ENCODE measurements at regions of chr17 and their contacts with region 1.

Region 1: GRCh38 chr17:78176548-78177025 is 8.2 kb downstream of the SYNGR2 start:
- DNase-seq: peak; percentile 68 to 79
- ATAC-seq: peak in 7 of 8 donors; percentile 15 to 52 (median 36)
- H3K4me3 ChIP-seq: no peak overlapping the region
- H3K27ac ChIP-seq: peak overlapping the region in 4 of 10 donors; percentile 31 to 94 (median 88)
- H3K4me1 ChIP-seq: peaks cover 37 to 78% (median 59%) of the 10 kb centered on the region in 9 donors
- H3K27me3 ChIP-seq: no peaks in the 10 kb centered on the region
- CTCF ChIP-seq: peak in 8 of 9 donors; percentile 83 to 95 (median 92)

Region 2: DNA sequence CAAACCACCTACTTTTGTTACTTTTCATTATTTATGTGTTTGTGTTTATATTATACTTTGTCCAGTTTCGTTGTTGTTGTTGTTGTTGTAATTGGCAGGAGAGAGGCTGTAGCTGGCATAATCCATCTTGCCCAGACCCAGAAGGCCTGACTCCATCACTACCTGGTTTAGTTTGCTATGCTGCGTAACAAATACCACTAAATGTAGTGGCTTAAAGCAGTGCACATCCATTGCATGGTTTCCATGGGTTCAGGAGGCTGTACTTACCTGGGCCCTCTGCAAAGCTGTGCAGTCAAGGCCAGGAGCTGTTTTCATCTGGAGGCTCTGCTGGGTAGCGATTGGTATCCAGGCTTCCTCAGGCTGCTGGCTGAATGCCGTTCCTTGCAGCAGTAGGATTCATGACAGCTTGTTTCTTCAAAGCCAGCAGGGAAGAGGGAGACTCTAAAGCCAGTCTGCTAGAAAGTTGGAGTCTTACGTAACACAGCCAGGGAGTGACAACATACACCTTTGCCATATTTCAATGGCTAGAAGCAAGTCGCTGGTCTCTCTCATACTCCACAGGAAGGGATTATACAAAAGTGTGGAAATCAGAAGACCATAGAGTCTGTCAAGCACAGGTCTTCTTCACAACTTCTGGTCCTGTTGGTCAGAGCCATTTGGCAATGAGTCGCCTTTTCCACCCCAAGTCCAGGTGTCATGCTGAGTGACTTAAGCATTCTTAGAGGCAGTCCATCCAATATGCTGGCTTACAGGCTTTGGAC is 177.0 kb before region 1 on chr17:
- intact Hi-C with region 1: no loop called
- DNase-seq: no peak
- ATAC-seq: no peak
- H3K4me3 ChIP-seq: no peak overlapping the region
- H3K27ac ChIP-seq: peak overlapping the region in 3 of 10 donors; percentile 9 to 13 (median 11)
- H3K4me1 ChIP-seq: peaks cover 8 to 81% (median 46%) of the 10 kb centered on the region in 9 donors
- H3K27me3 ChIP-seq: no peaks in the 10 kb centered on the region
- CTCF ChIP-seq: no peak

Region 3: GRCh38 chr17:78019367-78019975 is 157.1 kb before region 1 on chr17:
- intact Hi-C with region 1: loop called in 2 of 10 experiments (anchors 10 kb)
- DNase-seq: no peak
- ATAC-seq: peak in 1 of 8 donors; percentile 39
- H3K4me3 ChIP-seq: no peak overlapping the region
- H3K27ac ChIP-seq: peak overlapping the region in 3 of 10 donors; percentile 2 to 32 (median 3)
- H3K4me1 ChIP-seq: peaks cover 0 to 28% (median 13%) of the 10 kb centered on the region in 9 donors
- H3K27me3 ChIP-seq: no peaks in the 10 kb centered on the region
- CTCF ChIP-seq: peak in 8 of 9 donors; percentile 34 to 73 (median 66)

Region 4: GRCh38 chr17:78112518-78113226 is 63.9 kb before region 1 on chr17:
- intact Hi-C with region 1: loop called (anchors 1 to 5 kb)
- DNase-seq: peak; percentile 77 to 85
- ATAC-seq: peak; percentile 66 to 78 (median 70)
- H3K4me3 ChIP-seq: no peak overlapping the region
- H3K27ac ChIP-seq: peak overlapping the region in 8 of 10 donors; percentile 11 to 53 (median 29)
- H3K4me1 ChIP-seq: peaks cover 19 to 76% (median 31%) of the 10 kb centered on the region in 9 donors
- H3K27me3 ChIP-seq: no peaks in the 10 kb centered on the region
- CTCF ChIP-seq: peak; percentile 99 to 100 (median 100)

Region 5: GRCh38 chr17:78128551-78129350 is 47.8 kb before region 1 on chr17 and contains the start of gene TMC6:
- intact Hi-C with region 1: loop called in 5 of 10 experiments (anchors 5 kb)
- DNase-seq: peak in 1 of 2 donors; percentile 64
- ATAC-seq: peak; percentile 2 to 54 (median 24)
- H3K4me3 ChIP-seq: peak within 1 kb of the TSS; percentile 57 to 97 (median 88)
- H3K27ac ChIP-seq: peak within 1 kb of the TSS; percentile 89 to 98 (median 96)
- H3K4me1 ChIP-seq: peaks cover 31 to 98% (median 76%) of the 10 kb centered on the region in 9 donors
- H3K27me3 ChIP-seq: peaks cover 0 to 3% (median 0%) of the 10 kb centered on the region in 7 donors
- CTCF ChIP-seq: no peak
- total RNA-seq, gene TMC6: 42.3 to 109 (median 69.1) TPM

Region 6: DNA sequence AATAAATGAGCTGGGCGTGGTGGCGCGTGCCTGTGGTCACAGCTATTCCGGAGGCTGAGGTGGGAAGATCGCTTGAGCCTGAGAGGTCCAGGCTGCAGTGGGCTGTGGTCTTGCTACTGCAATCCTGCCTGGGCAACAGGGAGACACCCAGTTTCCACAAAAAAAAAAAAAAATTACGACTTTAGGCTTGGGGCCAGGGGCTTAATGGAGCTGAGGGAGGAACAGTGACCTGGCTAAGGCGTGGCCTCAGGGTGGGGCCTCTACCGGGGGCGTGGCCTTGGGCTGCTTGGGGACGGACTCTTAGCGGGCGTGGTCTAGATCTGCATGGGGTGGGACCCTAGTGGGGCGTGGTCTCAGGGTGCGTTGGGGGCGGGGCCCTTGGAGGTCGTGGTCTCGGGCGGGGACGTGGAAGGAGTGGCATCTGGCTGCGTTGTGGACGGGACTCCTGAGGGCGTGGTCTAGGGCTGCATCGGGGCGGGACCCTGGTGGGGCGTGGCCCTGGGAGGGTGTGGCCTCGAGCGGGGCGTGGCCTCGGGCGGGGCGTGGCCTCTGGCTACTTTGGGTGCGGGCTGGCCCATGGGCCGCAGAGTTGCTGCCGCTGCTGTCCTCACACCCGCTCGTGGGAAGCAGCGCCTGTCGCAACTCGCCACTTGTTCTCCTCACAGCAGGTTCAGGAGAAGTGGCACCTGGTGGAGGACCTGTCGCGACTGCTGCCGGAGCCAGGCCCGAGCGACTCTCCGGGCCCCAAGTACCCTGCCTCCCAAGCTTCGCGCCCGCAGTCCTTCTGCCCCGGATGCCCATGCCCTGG is 36.2 kb before region 1 on chr17:
- intact Hi-C with region 1: loop called in 1 of 10 experiments (anchors 5 kb)
- DNase-seq: peak; percentile 81 to 91
- ATAC-seq: peak; percentile 63 to 90 (median 79)
- H3K4me3 ChIP-seq: peak overlapping the region in 1 of 10 donors; percentile 20
- H3K27ac ChIP-seq: peak overlapping the region in 1 of 10 donors; percentile 58
- H3K4me1 ChIP-seq: peaks cover 13 to 66% (median 39%) of the 10 kb centered on the region in 9 donors
- H3K27me3 ChIP-seq: no peaks in the 10 kb centered on the region
- CTCF ChIP-seq: no peak